ENCODE measurements at regions of chr4 and their contacts with region 1.

Region 1: GRCh38 chr4:109798866-109799265 is 2.9 kb downstream of the CFI start:
- DNase-seq: no peak
- H3K4me3 ChIP-seq: no peak overlapping the region
- H3K27ac ChIP-seq: no peak overlapping the region
- H3K4me1 ChIP-seq: no peaks in the 10 kb centered on the region
- H3K27me3 ChIP-seq: no peaks in the 10 kb centered on the region
- CTCF ChIP-seq: no peak

Region 2: DNA sequence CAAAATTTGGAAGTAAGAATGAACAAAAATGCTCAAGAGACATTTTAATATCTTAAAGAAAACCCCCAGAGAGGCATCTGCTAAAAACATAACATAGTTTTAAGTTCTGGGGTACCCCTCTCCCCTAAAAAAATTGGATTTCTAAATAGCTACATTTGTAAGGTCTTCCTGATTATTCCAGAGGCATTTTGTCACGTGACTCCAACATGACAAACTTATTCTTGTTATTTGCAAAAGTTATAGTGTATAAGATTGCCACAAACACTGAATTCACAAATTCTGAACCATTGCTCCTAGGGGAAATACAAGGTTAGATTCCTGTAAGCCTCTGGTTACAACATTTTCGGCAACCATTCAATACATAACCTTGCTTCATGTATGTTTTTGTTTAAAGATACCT is 569.8 kb before region 1 on chr4:
- intact Hi-C with region 1: no loop called
- DNase-seq: no peak
- H3K4me3 ChIP-seq: no peak overlapping the region
- H3K27ac ChIP-seq: no peak overlapping the region
- H3K4me1 ChIP-seq: no peaks in the 10 kb centered on the region
- H3K27me3 ChIP-seq: no peaks in the 10 kb centered on the region
- CTCF ChIP-seq: no peak

Region 3: GRCh38 chr4:109729718-109730618 is 68.9 kb before region 1 on chr4 and contains the start of gene PLA2G12A:
- intact Hi-C with region 1: loop called (anchors 10 kb)
- DNase-seq: peak; percentile 84
- H3K4me3 ChIP-seq: peak within 1 kb of the TSS; percentile 66
- H3K27ac ChIP-seq: peak within 1 kb of the TSS; percentile 80
- H3K4me1 ChIP-seq: no peaks in the 10 kb centered on the region
- H3K27me3 ChIP-seq: no peaks in the 10 kb centered on the region
- CTCF ChIP-seq: no peak
- total RNA-seq, gene PLA2G12A: 46.9 to 55.1 TPM

Measured in colonic mucosa (tissue), 4 donors.